Activated CD4-positive, alpha-beta T cell treated with anti-CD3 and anti-CD28 coated beads for 36 hours (primary cell): ENCODE measurements at regions of chr1 and their contacts with region 1.

Region 1: DNA sequence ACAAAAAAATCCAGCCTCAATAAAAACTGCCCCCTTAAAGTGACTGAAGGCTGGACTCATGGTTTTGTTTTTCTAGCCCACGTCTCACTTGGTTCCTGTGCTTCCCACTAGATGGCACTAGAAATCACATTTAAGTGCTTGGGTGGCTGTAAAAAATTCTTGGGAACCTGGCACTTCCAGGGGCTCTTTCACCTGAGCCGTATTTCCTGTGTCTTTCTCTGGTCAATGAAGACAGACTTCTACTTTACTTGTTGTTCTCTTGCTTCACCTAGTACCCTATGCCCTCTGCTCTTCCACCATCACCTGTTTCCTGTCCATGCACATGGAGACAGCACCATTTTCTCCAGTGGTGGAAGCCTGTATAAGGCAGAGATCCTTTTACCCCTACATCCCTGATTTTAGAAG is 20.0 kb downstream of the METTL13 start:
- DNase-seq: no peak
- ATAC-seq: peak; percentile 57
- H3K4me3 Mint-ChIP-seq: no peak overlapping the region
- H3K27ac Mint-ChIP-seq: no peak overlapping the region
- H3K4me1 Mint-ChIP-seq: peaks cover 4% of the 10 kb centered on the region
- H3K27me3 Mint-ChIP-seq: no peaks in the 10 kb centered on the region

Region 2: GRCh38 chr1:171817511-171818265 is 16.2 kb after region 1 on chr1:
- CTCF ChIA-PET with region 1: interaction called, 37 read pairs
- POLR2A ChIA-PET with region 1: interaction called, 3 read pairs
- intact Hi-C with region 1: no loop called
- DNase-seq: peak; percentile 73
- ATAC-seq: peak; percentile 98
- H3K4me3 Mint-ChIP-seq: no peak overlapping the region
- H3K27ac Mint-ChIP-seq: peak overlapping the region; percentile 87
- H3K4me1 Mint-ChIP-seq: peaks cover 17% of the 10 kb centered on the region
- H3K27me3 Mint-ChIP-seq: no peaks in the 10 kb centered on the region

Region 3: GRCh38 chr1:171850651-171851350 is 49.3 kb after region 1 on chr1:
- CTCF ChIA-PET with region 1: interaction called, 7 read pairs
- POLR2A ChIA-PET with region 1: no interaction called
- intact Hi-C with region 1: loop called in 1 of 2 experiments (anchors 2 kb)
- DNase-seq: no peak
- ATAC-seq: no peak
- H3K4me3 Mint-ChIP-seq: no peak overlapping the region
- H3K27ac Mint-ChIP-seq: no peak overlapping the region
- H3K4me1 Mint-ChIP-seq: no peaks in the 10 kb centered on the region
- H3K27me3 Mint-ChIP-seq: no peaks in the 10 kb centered on the region

Region 4: GRCh38 chr1:171984850-171985485 is 183.5 kb after region 1 on chr1:
- CTCF ChIA-PET with region 1: interaction called, 184 read pairs
- POLR2A ChIA-PET with region 1: interaction called, 3 read pairs
- intact Hi-C with region 1: loop called (anchors 1 kb)
- DNase-seq: peak; percentile 8
- ATAC-seq: peak; percentile 58
- H3K4me3 Mint-ChIP-seq: no peak overlapping the region
- H3K27ac Mint-ChIP-seq: no peak overlapping the region
- H3K4me1 Mint-ChIP-seq: no peaks in the 10 kb centered on the region
- H3K27me3 Mint-ChIP-seq: no peaks in the 10 kb centered on the region

Region 5: GRCh38 chr1:172429331-172430127 is 628.0 kb after region 1 on chr1:
- CTCF ChIA-PET with region 1: no interaction called
- POLR2A ChIA-PET with region 1: no interaction called
- intact Hi-C with region 1: loop called in 1 of 2 experiments (anchors 10 kb)
- DNase-seq: peak; percentile 66
- ATAC-seq: peak; percentile 71
- H3K4me3 Mint-ChIP-seq: no peak overlapping the region
- H3K27ac Mint-ChIP-seq: no peak overlapping the region
- H3K4me1 Mint-ChIP-seq: peaks cover 30% of the 10 kb centered on the region
- H3K27me3 Mint-ChIP-seq: no peaks in the 10 kb centered on the region